Prostate gland (tissue), 2 donors: ENCODE measurements at regions of chr18 and their contacts with region 1.

Region 1: GRCh38 chr18:48777026-48777743 is 173.6 kb downstream of the SMAD7 start:
- DNase-seq: peak; percentile 40
- H3K4me3 ChIP-seq: no peak overlapping the region
- H3K27ac ChIP-seq: no peak overlapping the region
- H3K4me1 ChIP-seq: peaks cover 5% of the 10 kb centered on the region
- H3K27me3 ChIP-seq: no peaks in the 10 kb centered on the region
- CTCF ChIP-seq: peak; percentile 72 to 87 (median 78)
- POLR2A ChIP-seq: no peak

Region 2: GRCh38 chr18:48834413-48835031 is 57.3 kb after region 1 on chr18:
- intact Hi-C with region 1: loop called (anchors 5 kb)
- DNase-seq: no peak
- H3K4me3 ChIP-seq: no peak overlapping the region
- H3K27ac ChIP-seq: no peak overlapping the region
- H3K4me1 ChIP-seq: no peaks in the 10 kb centered on the region
- H3K27me3 ChIP-seq: no peaks in the 10 kb centered on the region
- CTCF ChIP-seq: no peak
- POLR2A ChIP-seq: no peak

Region 3: GRCh38 chr18:48859311-48860268 is 82.4 kb after region 1 on chr18:
- intact Hi-C with region 1: no loop called
- DNase-seq: no peak
- H3K4me3 ChIP-seq: no peak overlapping the region
- H3K27ac ChIP-seq: peak overlapping the region; percentile 43 to 47
- H3K4me1 ChIP-seq: no peaks in the 10 kb centered on the region
- H3K27me3 ChIP-seq: no peaks in the 10 kb centered on the region
- CTCF ChIP-seq: no peak
- POLR2A ChIP-seq: no peak

Region 4: DNA sequence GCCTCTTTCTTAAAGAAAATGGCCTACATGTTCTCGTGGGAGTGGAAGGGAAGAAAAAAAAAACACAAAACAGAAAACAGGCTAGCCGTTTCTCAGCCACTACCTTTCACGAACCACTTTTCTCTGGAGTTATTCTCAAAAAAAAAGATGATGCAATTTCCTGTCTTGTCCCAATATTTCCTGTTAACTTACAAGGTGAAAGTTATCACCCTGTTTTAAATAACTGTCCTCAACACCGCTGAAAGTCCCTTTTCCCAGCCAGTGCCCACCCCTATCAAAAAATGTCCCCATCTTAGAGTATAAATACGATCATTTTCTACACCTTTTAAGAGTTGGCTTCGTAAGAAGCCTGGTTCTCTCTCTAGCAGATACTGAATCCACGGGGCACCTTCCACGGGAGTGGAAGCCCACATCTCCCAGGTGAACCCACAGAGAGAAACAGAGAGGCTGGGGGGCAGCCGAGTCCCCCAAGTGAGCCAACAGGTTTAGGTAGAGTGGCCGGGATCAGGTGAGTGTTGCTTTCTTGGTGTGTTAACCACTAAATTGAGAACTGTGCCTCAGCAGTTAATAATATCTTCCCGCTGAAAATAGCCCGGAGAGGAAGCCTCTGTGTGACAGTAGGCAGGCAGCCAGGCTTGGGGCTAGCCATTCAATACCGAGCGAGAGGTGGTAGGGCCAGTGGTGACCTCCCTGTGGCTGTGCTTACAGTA is 157.7 kb after region 1 on chr18:
- intact Hi-C with region 1: loop called (anchors 5 kb)
- DNase-seq: no peak
- H3K4me3 ChIP-seq: no peak overlapping the region
- H3K27ac ChIP-seq: peak overlapping the region; percentile 53 to 77
- H3K4me1 ChIP-seq: peaks cover 40% of the 10 kb centered on the region
- H3K27me3 ChIP-seq: no peaks in the 10 kb centered on the region
- CTCF ChIP-seq: no peak
- POLR2A ChIP-seq: no peak

Region 5: GRCh38 chr18:48951448-48952286 is 174.5 kb after region 1 on chr18:
- intact Hi-C with region 1: loop called (anchors 5 kb)
- DNase-seq: peak; percentile 85
- H3K4me3 ChIP-seq: peak overlapping the region; percentile 70 to 93
- H3K27ac ChIP-seq: peak overlapping the region; percentile 98 to 99
- H3K4me1 ChIP-seq: peaks cover 3% of the 10 kb centered on the region
- H3K27me3 ChIP-seq: no peaks in the 10 kb centered on the region
- CTCF ChIP-seq: peak in 2 of 4 experiments; percentile 35 to 36
- POLR2A ChIP-seq: peak; percentile 89

Region 6: DNA sequence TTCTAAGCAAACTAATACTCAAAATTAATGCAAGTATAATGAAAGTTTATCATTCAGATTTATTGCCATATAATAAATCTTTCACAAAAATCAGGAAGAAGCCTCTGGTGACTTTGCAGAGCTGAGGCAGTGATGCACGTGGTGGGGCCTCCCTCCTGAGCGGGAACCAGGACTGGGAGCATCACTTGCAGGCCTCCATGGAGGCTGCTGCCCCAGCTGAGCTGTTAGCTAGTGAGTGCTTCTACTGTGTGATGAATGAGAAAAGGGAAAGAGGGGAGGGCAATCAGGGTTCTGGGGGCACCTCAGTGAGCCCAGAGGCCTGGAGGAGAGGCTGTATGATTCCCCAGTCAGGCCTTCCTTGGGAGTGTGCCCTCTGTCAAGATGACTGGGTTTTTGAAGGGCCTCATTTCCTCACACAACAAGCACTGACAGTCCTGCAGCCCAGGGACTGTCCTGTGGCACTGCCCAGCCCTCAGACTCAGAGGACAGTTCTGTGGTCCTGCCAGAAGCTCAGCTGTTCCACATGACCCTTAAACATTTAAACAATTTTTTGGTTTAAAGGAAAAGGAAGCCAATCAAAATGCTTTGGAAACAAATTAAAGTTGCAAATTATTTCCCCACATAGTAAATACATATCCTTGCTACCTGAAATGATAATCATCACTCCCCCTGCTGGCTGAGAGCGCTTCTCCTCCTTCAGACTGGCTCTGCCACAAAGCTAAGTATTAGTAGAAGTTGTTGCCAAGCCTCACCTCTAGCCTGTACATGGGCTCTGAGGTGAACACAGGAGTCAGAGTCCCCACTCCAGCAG is 264.5 kb after region 1 on chr18:
- intact Hi-C with region 1: loop called (anchors 5 kb)
- DNase-seq: peak; percentile 78
- H3K4me3 ChIP-seq: no peak overlapping the region
- H3K27ac ChIP-seq: no peak overlapping the region
- H3K4me1 ChIP-seq: no peaks in the 10 kb centered on the region
- H3K27me3 ChIP-seq: no peaks in the 10 kb centered on the region
- CTCF ChIP-seq: peak; percentile 48 to 80 (median 70)
- POLR2A ChIP-seq: no peak

Region 7: GRCh38 chr18:49178736-49179135 is 401.6 kb after region 1 on chr18:
- intact Hi-C with region 1: loop called (anchors 10 kb)
- DNase-seq: no peak
- H3K4me3 ChIP-seq: no peak overlapping the region
- H3K27ac ChIP-seq: no peak overlapping the region
- H3K4me1 ChIP-seq: no peaks in the 10 kb centered on the region
- H3K27me3 ChIP-seq: no peaks in the 10 kb centered on the region
- CTCF ChIP-seq: peak in 3 of 4 experiments; percentile 21 to 33 (median 26)
- POLR2A ChIP-seq: no peak

Region 8: DNA sequence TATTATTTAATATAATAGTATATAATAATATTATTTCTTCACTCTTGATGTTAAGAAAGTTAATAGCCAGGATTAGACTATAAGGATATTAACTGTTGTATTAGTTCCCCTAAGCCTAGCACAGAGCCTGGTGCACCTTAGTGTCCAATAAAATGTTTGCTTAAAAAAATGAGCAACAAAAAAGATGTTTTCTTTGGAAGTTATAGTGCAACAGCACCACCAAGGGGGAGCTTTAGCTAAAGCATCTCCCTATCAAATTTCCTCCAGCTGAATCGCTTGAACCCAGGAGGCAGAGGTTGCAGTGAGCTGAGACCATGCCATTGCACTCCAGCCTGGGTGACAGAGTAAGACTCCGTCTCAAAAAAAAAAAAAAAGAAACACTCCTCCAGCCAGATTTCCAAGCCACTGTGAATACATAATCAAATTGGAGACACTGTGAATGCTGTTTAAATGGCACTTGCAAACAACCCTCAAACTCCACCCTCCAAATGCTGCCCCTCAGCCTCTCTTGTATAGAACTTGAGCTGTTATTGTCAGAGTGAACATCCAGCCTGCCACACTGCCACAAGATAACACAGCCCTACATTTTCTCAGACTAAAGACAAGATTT is 461.4 kb after region 1 on chr18:
- intact Hi-C with region 1: loop called (anchors 5 kb)
- DNase-seq: no peak
- H3K4me3 ChIP-seq: no peak overlapping the region
- H3K27ac ChIP-seq: no peak overlapping the region
- H3K4me1 ChIP-seq: no peaks in the 10 kb centered on the region
- H3K27me3 ChIP-seq: no peaks in the 10 kb centered on the region
- CTCF ChIP-seq: peak in 2 of 4 experiments; percentile 28 to 38
- POLR2A ChIP-seq: no peak